Upper lobe of right lung (tissue), 1 donor: ENCODE measurements at regions of chr5 and their contacts with region 1.

Region 1: GRCh38 chr5:152142840-152143469 is 218.3 kb upstream of the GLRA1 start:
- DNase-seq: peak; percentile 67
- ATAC-seq: peak; percentile 89
- H3K4me3 ChIP-seq: no peak overlapping the region
- H3K27ac ChIP-seq: no peak overlapping the region
- H3K4me1 ChIP-seq: no peaks in the 10 kb centered on the region
- H3K27me3 ChIP-seq: no peaks in the 10 kb centered on the region
- CTCF ChIP-seq: peak; percentile 92

Region 2: DNA sequence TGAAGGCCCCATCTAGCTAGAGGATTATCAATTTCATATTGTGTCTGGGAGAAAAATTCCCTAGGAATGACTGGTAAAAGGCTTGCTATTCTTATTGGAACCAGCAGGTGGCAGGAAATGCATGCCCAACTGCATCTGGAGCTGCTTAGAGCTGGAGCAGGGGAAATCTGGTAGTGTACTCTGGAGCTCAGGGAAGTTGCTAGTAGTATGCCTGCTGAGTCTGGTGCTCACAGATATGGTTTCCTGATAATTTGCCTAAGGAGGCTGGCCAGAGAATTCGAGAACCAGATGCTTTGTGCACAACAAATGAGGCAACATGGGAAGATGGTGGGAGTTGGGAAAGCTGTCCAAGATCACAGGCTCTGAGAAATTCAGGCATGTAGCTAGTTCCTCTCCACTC is 317.5 kb before region 1 on chr5:
- intact Hi-C with region 1: loop called (anchors 5 kb)
- DNase-seq: no peak
- ATAC-seq: peak; percentile 87
- H3K4me3 ChIP-seq: no peak overlapping the region
- H3K27ac ChIP-seq: no peak overlapping the region
- H3K4me1 ChIP-seq: no peaks in the 10 kb centered on the region
- H3K27me3 ChIP-seq: no peaks in the 10 kb centered on the region
- CTCF ChIP-seq: peak; percentile 85